ENCODE measurements at regions of chr11 and their contacts with region 1.

Region 1: DNA sequence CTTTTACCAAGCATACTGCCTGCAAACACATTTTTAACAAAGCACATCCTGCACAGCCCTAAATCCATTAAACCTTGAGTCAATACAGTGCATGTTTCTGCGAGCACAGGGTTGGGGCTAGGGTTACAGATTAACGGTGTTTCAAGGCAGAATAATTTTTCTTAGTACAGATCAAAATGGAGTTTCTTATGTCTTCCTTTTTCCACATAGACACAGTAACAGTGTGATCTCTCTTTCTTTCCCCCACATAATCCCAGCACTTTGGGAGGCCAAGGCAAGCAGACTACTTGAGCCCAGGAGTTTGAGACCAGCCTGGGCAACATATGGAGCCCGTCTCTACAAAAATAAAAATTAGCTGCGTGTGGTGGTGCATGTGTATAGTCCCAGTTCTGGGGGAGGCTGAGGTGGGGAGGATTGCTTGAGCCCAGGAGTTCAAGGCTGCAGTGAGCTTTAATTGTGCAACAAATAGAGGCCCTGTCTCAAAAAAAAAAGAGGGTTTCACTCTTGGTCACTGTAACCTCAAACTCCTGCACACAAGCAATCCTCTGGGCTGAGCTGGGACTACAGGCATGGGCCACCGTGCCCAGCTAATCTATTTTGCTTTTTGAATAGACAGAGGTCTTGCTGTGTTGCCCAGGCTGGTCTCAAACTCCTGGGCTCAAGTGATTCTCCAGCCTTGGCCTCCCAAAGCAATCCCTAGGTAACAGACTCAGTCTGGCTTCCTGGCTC is 19.7 kb upstream of the SLC3A2 start:
- DNase-seq: no peak
- ATAC-seq: peak; percentile 28
- H3K4me3 Mint-ChIP-seq: no peak overlapping the region
- H3K27ac Mint-ChIP-seq: peak overlapping the region; percentile 69
- H3K4me1 Mint-ChIP-seq: peaks cover 43% of the 10 kb centered on the region
- H3K27me3 Mint-ChIP-seq: no peaks in the 10 kb centered on the region

Region 2: DNA sequence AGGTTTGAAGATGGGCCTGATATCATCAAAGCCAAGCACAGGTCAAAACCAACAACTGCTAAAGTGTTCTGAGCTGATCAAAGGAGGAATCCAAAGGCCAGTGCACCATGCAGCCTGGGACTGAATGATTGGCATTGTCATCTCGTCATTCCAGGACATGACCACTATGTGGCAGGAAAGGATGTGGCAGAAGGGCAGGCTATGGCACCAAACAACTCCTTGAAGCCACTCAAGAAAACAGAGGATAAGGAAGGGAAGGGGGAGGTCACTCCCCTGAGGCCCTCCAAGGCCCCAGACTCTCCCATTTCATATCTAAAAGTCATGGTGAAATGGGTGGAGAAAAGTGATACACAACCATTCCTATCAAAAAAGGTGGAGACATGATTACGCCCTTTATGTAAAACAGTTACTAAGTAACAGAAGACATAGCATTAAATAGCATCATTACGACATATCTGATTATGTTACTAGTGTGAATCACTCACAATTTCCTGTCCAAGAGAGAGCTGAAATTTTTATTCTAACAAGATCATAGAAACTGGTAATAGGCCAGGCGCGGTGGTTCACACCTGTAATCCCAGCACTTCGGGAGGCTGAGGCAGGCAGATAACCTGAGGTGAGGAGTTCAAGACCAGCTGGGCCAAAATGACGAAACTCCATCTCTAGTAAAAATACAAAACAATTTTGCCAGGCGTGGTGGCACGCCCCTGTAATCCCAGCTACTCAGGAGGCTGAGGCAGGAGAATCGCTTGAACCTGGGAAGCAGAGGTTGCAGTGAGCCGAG is 363.7 kb before region 1 on chr11:
- CTCF ChIA-PET with region 1: no interaction called
- POLR2A ChIA-PET with region 1: interaction called, 10 read pairs
- intact Hi-C with region 1: no loop called
- DNase-seq: peak; percentile 53
- ATAC-seq: peak; percentile 81
- H3K4me3 Mint-ChIP-seq: no peak overlapping the region
- H3K27ac Mint-ChIP-seq: no peak overlapping the region
- H3K4me1 Mint-ChIP-seq: peaks cover 3% of the 10 kb centered on the region
- H3K27me3 Mint-ChIP-seq: peaks cover 4% of the 10 kb centered on the region

Region 3: DNA sequence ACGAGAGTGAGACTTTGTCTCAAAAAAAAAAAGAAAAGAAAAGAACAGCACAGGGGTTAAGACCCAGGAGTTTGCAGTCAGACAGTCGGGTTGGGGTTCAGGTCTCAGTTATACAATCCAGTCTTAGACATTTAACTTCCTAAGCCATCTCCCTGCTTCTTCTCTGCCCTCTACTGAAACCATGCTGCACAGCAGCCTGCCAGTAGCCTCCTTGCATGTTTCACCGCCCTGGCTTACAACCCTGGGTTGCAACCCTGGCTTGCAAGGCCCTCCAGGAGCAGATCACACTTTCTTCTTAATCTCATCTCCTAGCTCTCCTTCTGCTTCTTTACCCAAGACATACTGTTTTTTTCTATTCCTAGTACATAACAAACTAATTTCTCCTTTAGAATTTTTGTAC is 233.3 kb before region 1 on chr11:
- CTCF ChIA-PET with region 1: no interaction called
- POLR2A ChIA-PET with region 1: no interaction called
- intact Hi-C with region 1: no loop called
- DNase-seq: no peak
- ATAC-seq: peak; percentile 47
- H3K4me3 Mint-ChIP-seq: no peak overlapping the region
- H3K27ac Mint-ChIP-seq: peak overlapping the region; percentile 55
- H3K4me1 Mint-ChIP-seq: peaks cover 6% of the 10 kb centered on the region
- H3K27me3 Mint-ChIP-seq: no peaks in the 10 kb centered on the region

Region 4: DNA sequence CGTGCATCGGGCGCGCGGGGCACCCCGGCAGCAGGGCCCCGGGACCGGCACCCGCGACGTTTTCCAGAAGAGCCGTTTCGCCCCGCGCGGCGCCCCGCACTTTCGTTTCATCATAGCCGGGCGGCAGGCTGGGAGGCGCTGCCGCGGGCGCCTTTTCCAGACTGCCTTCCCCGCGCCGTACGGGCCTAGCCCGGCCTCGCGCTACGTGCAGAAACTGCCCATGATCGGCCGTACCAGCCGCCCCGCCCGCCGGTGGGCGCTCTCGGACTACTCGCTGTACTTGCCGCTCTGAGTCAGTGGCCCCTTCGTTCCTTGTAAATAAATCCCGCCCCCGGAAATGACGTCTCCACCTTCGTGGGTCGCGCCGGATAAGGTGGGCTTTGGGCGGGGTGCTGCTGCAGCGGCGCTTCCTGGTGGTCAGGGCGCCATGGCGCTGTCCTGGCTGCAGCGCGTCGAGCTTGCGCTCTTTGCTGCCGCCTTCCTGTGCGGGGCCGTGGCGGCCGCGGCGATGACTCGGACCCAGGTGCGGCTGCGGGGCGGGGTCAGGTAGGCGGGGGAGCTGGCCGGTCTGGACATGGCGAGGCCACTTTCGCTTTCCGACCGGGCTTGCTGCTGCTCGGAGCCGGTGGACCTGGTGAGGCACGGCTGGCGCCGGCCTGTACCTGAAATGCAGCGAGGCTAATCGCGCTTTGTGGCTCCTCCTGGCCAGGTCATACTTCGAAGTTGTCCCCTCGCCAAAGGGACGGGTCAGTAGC is 73.8 kb before region 1 on chr11 and contains the start of gene TMEM179B:
- CTCF ChIA-PET with region 1: interaction called, 44 read pairs
- POLR2A ChIA-PET with region 1: interaction called, 12 read pairs
- intact Hi-C with region 1: loop called (anchors 1 kb)
- DNase-seq: peak; percentile 99
- ATAC-seq: peak; percentile 63
- H3K4me3 Mint-ChIP-seq: peak within 1 kb of the TSS; percentile 90
- H3K27ac Mint-ChIP-seq: peak within 1 kb of the TSS; percentile 95
- H3K4me1 Mint-ChIP-seq: peaks cover 42% of the 10 kb centered on the region
- H3K27me3 Mint-ChIP-seq: no peaks in the 10 kb centered on the region
- total RNA-seq, gene TMEM179B: 19.5 to 35.9 TPM

Region 5: DNA sequence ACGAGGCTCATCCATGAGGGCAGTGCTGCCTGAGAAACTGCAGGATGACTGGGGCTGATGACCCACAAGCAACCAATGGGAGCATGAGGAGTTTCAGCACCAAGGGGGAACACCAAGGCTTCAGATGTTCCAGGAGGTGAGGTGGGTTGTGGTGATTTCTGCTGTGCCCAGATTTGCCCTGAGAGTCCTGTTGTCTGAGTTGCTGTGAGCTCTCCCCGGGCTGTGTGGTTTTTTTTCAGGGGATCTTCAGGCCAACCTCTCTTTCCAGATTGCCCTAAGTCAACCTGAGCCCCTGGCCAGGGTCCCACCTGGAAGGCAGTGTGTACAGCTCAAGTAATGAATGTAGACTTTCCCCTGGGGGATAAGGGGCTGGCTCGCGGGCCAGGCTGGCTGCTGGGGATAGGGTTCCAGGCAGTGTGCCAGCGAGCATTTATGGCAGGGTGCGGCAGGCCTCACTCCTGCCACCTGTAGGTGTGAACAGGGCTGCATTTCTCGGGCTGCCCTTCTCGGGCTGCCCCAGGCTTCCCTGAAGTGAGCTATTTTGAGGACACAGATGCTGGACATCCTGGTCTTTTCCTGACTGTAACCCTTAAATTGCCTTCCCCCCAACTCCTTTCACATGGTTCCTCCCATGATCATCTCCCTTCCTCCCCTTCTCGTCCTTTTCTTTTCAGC is 114.0 kb after region 1 on chr11:
- CTCF ChIA-PET with region 1: no interaction called
- POLR2A ChIA-PET with region 1: no interaction called
- intact Hi-C with region 1: no loop called
- DNase-seq: peak; percentile 59
- ATAC-seq: peak; percentile 73
- H3K4me3 Mint-ChIP-seq: no peak overlapping the region
- H3K27ac Mint-ChIP-seq: no peak overlapping the region
- H3K4me1 Mint-ChIP-seq: no peaks in the 10 kb centered on the region
- H3K27me3 Mint-ChIP-seq: peaks cover 5% of the 10 kb centered on the region